ENCODE measurements at regions of chr18 and their contacts with region 1.

Region 1: GRCh38 chr18:55243857-55244256 is 284.6 kb upstream of the CCDC68 start:
- DNase-seq: no peak

Region 2: DNA sequence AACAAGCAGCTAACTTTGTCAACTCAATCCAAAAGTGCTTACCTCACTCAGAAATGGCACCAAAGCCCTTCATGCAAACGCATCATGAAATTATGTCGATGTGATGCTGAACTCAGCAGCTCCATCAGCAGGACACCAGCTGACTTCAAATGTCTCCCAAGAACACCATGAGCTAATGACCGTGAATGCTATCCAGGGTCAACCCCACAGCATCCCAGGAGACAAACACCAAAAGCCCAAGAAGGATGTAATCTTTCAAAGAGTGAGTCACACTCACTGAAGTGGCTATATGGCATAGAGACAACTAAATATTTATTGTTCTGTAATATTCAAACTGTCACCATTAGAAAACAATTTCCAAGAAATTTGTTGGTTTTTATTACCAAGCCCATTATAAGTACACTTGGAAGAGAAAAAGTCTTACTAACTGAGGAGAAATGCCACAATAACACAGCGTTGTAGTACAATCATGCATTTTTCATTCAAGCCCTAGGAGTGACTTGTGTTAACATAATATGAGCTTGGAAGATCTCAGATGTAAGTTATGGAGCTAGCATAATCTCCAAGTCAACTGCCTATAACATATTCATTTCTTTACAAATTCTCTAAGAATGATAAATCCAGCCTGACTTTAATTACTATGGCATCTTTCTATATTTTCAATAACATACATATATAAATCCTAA is 119.6 kb before region 1 on chr18:
- intact Hi-C with region 1: no loop called
- DNase-seq: no peak

Region 3: DNA sequence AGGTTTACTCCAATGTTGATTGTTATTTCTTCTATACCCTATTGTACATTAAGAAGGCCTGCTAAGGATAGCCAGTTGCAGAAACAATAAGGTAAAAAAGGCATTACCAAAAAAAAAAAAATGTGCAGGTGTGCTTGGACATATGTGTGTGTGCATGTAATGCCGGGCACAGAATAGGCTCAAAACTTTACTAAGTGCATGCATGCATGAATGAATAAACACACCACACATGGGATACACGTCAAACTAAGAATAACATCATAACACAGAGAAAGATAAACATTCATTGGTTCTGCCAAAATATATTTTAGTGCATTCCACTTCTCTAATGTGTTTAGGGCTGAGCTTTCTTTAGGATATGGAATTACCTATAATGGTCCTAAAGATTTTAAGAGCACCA is 45.9 kb after region 1 on chr18:
- intact Hi-C with region 1: loop called (anchors 10 kb)
- DNase-seq: no peak

Region 4: DNA sequence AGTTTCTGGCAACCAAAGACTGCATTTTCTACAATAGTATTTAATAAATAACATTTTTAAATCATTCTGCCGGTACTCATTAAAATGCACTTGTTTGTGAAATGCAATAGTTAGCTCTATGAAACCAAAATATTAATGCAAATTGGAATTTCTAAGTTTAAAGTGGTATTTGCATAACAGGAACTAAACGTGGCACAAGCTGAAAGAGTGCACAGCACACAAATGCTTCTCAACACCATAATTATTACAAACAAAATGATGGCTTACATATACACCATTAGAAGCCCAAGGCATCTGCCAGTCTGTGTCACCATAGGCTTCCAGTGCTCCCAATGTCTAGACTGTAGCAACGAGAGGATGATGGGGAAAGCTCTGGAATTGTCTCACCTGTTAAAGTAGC is 63.6 kb after region 1 on chr18:
- intact Hi-C with region 1: no loop called
- DNase-seq: no peak